ENCODE measurements at regions of chr2 and their contacts with region 1.

Region 1: DNA sequence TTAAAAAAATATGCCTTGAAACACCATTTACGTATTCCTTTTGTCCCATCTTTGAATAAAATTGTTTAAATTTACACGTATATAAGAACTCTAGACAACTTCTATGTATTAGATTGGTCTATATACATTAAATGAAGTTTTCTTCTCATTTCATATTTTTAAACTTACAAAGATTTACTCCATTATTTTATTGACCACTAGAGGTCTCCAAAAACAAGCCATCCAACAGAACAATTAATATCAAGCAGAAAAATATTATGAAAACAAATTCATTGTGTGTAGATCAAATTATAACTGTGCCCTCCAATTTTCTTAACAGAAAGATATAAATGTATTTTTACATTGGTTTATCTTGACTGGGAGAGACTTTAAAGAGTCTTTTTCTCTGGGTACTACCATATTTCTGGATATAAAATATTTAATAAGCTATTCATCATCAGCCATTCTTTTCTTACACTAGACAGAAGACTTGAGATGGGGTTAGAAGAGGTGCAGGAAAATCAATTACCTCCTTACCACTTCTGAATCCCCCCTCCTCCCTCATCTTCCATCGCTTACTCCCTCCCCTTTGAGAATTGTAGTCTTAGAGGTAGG is 66.5 kb downstream of the DPP4 start:
- DNase-seq: no peak
- ATAC-seq: no peak
- H3K4me3 ChIP-seq: no peak overlapping the region
- H3K27ac ChIP-seq: no peak overlapping the region
- H3K4me1 ChIP-seq: peaks cover under 1% of the 10 kb centered on the region
- H3K27me3 ChIP-seq: no peaks in the 10 kb centered on the region
- CTCF ChIP-seq: peak; percentile 82

Region 2: GRCh38 chr2:162123806-162124758 is 116.5 kb after region 1 on chr2:
- intact Hi-C with region 1: loop called (anchors 10 kb)
- DNase-seq: no peak
- ATAC-seq: peak; percentile 73
- H3K4me3 ChIP-seq: no peak overlapping the region
- H3K27ac ChIP-seq: no peak overlapping the region
- H3K4me1 ChIP-seq: peaks cover 2% of the 10 kb centered on the region
- H3K27me3 ChIP-seq: no peaks in the 10 kb centered on the region
- CTCF ChIP-seq: peak; percentile 89

Measured in upper lobe of right lung (tissue), 1 donor.